HCT116 (cell line): ENCODE measurements at regions of chr5 and their contacts with region 1.

Region 1: GRCh38 chr5:134411546-134412266 is at the start of gene CDKN2AIPNL:
- DNase-seq: peak; percentile 60
- ATAC-seq: peak; percentile 99
- H3K4me3 ChIP-seq: peak within 1 kb of the TSS; percentile 70 to 98
- H3K27ac ChIP-seq: peak within 1 kb of the TSS; percentile 75
- H3K4me1 ChIP-seq: peaks cover 10 to 30% of the 10 kb centered on the region in 2 experiments
- H3K27me3 ChIP-seq: no peaks in the 10 kb centered on the region
- CTCF ChIP-seq: peak; percentile 67 to 72 (median 69)
- POLR2A ChIP-seq: peak; percentile 49
- RAD21 ChIP-seq: peak; percentile 80
- total RNA-seq, gene CDKN2AIPNL: 63.0 TPM

Region 2: DNA sequence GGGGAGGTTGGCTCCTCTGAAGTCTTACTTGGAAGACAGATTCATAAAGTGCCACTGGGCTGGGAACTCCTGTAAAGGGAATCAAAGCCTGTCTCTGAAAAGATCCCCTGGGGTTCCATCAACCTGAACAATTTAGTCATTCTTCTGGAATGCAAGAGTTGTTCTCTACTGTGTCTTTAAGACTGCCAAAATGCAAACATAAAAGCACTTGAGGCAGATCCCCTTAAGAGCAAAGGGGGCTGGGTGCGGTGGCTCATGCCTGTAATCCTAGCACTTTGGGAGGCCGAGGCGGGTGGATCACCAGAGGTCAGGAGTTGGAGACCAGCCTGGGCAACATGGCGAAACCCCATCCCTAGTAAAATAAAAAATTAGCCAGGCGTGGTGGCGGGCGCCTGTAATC is 16.8 kb before region 1 on chr5:
- CTCF ChIA-PET with region 1: no interaction called
- POLR2A ChIA-PET with region 1: no interaction called
- RAD21 ChIA-PET with region 1: no interaction called
- intact Hi-C with region 1: no loop called
- DNase-seq: no peak
- ATAC-seq: peak; percentile 32; the same call in 1 of the 2 replicates
- H3K4me3 ChIP-seq: no peak overlapping the region
- H3K27ac ChIP-seq: no peak overlapping the region
- H3K4me1 ChIP-seq: peaks cover 0 to 10% of the 10 kb centered on the region in 2 experiments; a peak in 2 of 4 replicates
- H3K27me3 ChIP-seq: no peaks in the 10 kb centered on the region
- CTCF ChIP-seq: no peak
- POLR2A ChIP-seq: no peak
- RAD21 ChIP-seq: no peak

Region 3: GRCh38 chr5:134465816-134466240 is 54.1 kb after region 1 on chr5:
- CTCF ChIA-PET with region 1: no interaction called
- POLR2A ChIA-PET with region 1: interaction called, 5 read pairs
- RAD21 ChIA-PET with region 1: no interaction called
- intact Hi-C with region 1: loop called (anchors 5 kb)
- DNase-seq: peak; percentile 68
- ATAC-seq: peak; percentile 83
- H3K4me3 ChIP-seq: peak overlapping the region; percentile 62 to 69
- H3K27ac ChIP-seq: peak overlapping the region; percentile 99
- H3K4me1 ChIP-seq: peaks cover 16 to 30% of the 10 kb centered on the region in 2 experiments
- H3K27me3 ChIP-seq: no peaks in the 10 kb centered on the region
- CTCF ChIP-seq: 0 out of 6 replicates have a peak, but pooled peaks of 1 of the 3 experiments have one; percentile 3
- POLR2A ChIP-seq: peak; percentile 85
- RAD21 ChIP-seq: no peak

Region 4: GRCh38 chr5:134493461-134494055 is 81.9 kb after region 1 on chr5:
- CTCF ChIA-PET with region 1: no interaction called
- POLR2A ChIA-PET with region 1: no interaction called
- RAD21 ChIA-PET with region 1: no interaction called
- intact Hi-C with region 1: no loop called
- DNase-seq: no peak
- ATAC-seq: no peak
- H3K4me3 ChIP-seq: no peak overlapping the region
- H3K27ac ChIP-seq: no peak overlapping the region
- H3K4me1 ChIP-seq: peaks cover 3 to 9% of the 10 kb centered on the region in 2 experiments; a peak in 3 of 4 replicates
- H3K27me3 ChIP-seq: no peaks in the 10 kb centered on the region
- CTCF ChIP-seq: no peak
- POLR2A ChIP-seq: no peak
- RAD21 ChIP-seq: no peak

Region 5: GRCh38 chr5:134511788-134512650 is 100.3 kb after region 1 on chr5:
- CTCF ChIA-PET with region 1: interaction called, 6 read pairs
- POLR2A ChIA-PET with region 1: interaction called, 3 read pairs
- RAD21 ChIA-PET with region 1: interaction called, 3 read pairs
- intact Hi-C with region 1: loop called (anchors 5 kb)
- DNase-seq: no peak
- ATAC-seq: peak; percentile 53
- H3K4me3 ChIP-seq: peak overlapping the region in 1 of 2 experiments; percentile 49; a peak in 3 of 4 replicates
- H3K27ac ChIP-seq: peak overlapping the region; percentile 98
- H3K4me1 ChIP-seq: peaks cover 67 to 78% of the 10 kb centered on the region in 2 experiments
- H3K27me3 ChIP-seq: no peaks in the 10 kb centered on the region
- CTCF ChIP-seq: peak in 2 of 3 experiments; percentile 45 to 54; a peak in 4 of 6 replicates
- POLR2A ChIP-seq: peak; percentile 42
- RAD21 ChIP-seq: no peak

Region 6: GRCh38 chr5:134577796-134578363 is 166.2 kb after region 1 on chr5:
- CTCF ChIA-PET with region 1: no interaction called
- POLR2A ChIA-PET with region 1: no interaction called
- RAD21 ChIA-PET with region 1: no interaction called
- intact Hi-C with region 1: loop called (anchors 1 kb)
- DNase-seq: peak; percentile 54
- ATAC-seq: peak; percentile 83
- H3K4me3 ChIP-seq: no peak overlapping the region
- H3K27ac ChIP-seq: no peak overlapping the region
- H3K4me1 ChIP-seq: peaks cover 0 to 11% of the 10 kb centered on the region in 2 experiments; a peak in 2 of 4 replicates
- H3K27me3 ChIP-seq: no peaks in the 10 kb centered on the region
- CTCF ChIP-seq: peak; percentile 83 to 89 (median 84)
- POLR2A ChIP-seq: no peak
- RAD21 ChIP-seq: peak; percentile 93